Activated CD8-positive, alpha-beta memory T cell treated with anti-CD3 and anti-CD28 coated beads, Interleukin-2, amount 10 ng/mL, durations not matched to agents 7 days and 5 days (primary cell): ENCODE measurements at regions of chr20 and their contacts with region 1.

Region 1: DNA sequence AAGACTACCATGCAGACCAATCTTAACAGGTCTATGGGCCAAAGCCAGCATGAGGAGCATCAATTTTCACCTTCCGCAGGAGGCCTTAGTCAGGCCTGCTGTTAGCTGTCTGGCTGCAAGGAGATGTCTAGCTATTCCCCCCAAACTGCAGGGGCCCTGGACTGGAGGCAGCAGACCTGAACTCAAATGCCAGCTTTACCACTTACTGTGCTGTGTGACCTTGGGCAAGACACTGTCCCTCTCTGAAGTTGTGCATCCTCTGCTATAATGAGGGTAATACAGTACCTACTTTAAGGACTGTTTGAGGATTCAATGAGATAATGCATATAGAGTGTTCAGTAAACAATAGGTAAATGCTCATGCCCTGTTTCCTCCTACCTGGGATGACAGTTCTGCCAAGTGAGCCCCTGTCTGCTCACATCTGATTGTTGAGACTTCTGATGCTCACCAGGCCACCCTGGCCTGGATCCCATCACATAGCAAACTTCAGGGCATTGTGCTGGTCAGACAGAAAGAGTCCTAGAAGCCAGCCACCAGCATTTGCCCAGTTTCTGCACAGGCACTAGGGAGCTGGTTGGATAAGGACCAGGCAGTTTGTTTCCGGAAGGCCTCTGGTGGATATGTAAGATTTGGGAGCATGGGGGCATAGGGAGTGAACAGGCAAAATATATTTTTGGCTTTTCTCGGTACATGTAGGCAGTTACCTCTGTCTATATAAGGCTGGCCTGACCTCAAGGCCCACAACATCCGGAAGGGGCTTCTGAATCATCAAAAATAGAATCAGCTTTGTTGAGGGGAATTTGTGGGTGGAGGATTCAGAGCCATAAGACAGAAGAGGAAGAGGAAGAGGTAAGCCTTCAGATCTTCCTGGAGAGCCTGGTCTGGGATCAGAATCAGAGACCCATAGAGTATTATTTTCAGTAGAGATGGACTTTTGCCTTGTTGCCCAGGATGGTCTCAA is 2.3 kb upstream of the OCSTAMP start:
- DNase-seq: peak; percentile 92
- ATAC-seq: peak; percentile 91
- H3K4me3 Mint-ChIP-seq: peak overlapping the region; percentile 39
- H3K27ac Mint-ChIP-seq: peak overlapping the region; percentile 88
- H3K4me1 Mint-ChIP-seq: peaks cover 66% of the 10 kb centered on the region
- H3K27me3 Mint-ChIP-seq: no peaks in the 10 kb centered on the region

Region 2: GRCh38 chr20:46681032-46681854 is 128.5 kb after region 1 on chr20:
- CTCF ChIA-PET with region 1: interaction called, 22 read pairs
- DNase-seq: peak; percentile 81
- ATAC-seq: peak; percentile 69
- H3K4me3 Mint-ChIP-seq: no peak overlapping the region
- H3K27ac Mint-ChIP-seq: peak overlapping the region; percentile 45
- H3K4me1 Mint-ChIP-seq: peaks cover 32% of the 10 kb centered on the region
- H3K27me3 Mint-ChIP-seq: no peaks in the 10 kb centered on the region

Region 3: GRCh38 chr20:46689082-46689754 is 136.5 kb after region 1 on chr20 and contains the start of gene TP53RK:
- CTCF ChIA-PET with region 1: interaction called, 11 read pairs
- DNase-seq: peak; percentile 99
- ATAC-seq: peak; percentile 98
- H3K4me3 Mint-ChIP-seq: peak within 1 kb of the TSS; percentile 95
- H3K27ac Mint-ChIP-seq: peak within 1 kb of the TSS; percentile 93
- H3K4me1 Mint-ChIP-seq: peaks cover 38% of the 10 kb centered on the region
- H3K27me3 Mint-ChIP-seq: no peaks in the 10 kb centered on the region
- total RNA-seq, gene TP53RK: 14.8 to 20.9 TPM